ENCODE measurements at regions of chr6 and their contacts with region 1.

Region 1: GRCh38 chr6:17086469-17086868 is 15.4 kb upstream of the STMND1 start:
- DNase-seq: peak in 4 of 6 donors; percentile 27 to 65 (median 57)
- ATAC-seq: peak; percentile 92 to 98 (median 96)
- H3K4me3 ChIP-seq: no peak overlapping the region
- H3K27ac ChIP-seq: no peak overlapping the region
- H3K4me1 ChIP-seq: no peaks in the 10 kb centered on the region
- H3K27me3 ChIP-seq: no peaks in the 10 kb centered on the region
- CTCF ChIP-seq: peak; percentile 53 to 63 (median 59)

Region 2: GRCh38 chr6:16319813-16320532 is 766.5 kb before region 1 on chr6:
- intact Hi-C with region 1: loop called in 1 of 3 experiments (anchors 10 kb)
- DNase-seq: peak in 3 of 6 donors; percentile 25 to 42 (median 37)
- ATAC-seq: peak; percentile 53 to 76 (median 70)
- H3K4me3 ChIP-seq: no peak overlapping the region
- H3K27ac ChIP-seq: peak overlapping the region in 3 of 4 donors; percentile 58 to 86 (median 70)
- H3K4me1 ChIP-seq: peaks cover 0 to 14% (median 4%) of the 10 kb centered on the region in 3 donors
- H3K27me3 ChIP-seq: no peaks in the 10 kb centered on the region
- CTCF ChIP-seq: no peak

Region 3: DNA sequence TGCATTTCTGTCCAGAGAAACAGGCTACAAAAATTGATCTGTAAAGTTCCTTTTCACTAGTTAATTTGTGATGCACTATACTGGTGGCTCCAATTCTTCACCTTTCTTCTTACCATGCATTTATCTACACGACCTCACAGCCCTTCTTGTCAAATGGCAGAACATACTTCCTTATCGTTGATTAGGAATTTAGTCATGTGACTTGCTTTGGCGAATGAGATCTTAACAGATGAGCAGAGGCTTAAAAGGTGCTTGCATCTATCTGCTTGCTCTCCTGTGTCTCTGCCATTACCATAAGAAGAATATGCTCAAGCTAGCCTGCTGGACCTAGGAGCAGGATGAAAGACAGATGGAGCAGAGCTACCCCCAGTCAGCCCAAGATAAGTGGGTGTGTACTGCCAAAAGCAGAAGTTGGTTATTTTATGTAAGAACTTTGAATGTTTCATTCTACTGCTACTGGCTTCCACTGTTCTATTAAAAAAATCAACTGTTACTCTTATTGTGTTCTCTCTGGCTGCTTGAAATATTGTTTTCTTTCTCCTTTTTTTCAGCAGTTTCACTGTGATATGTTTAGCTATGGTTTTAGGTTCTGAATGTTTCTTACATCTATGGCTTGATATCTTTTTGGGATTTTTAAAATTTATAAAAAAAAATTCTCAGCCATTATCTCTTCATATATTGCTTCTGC is 154.5 kb after region 1 on chr6:
- intact Hi-C with region 1: no loop called
- DNase-seq: no peak
- ATAC-seq: no peak
- H3K4me3 ChIP-seq: no peak overlapping the region
- H3K27ac ChIP-seq: no peak overlapping the region
- H3K4me1 ChIP-seq: no peaks in the 10 kb centered on the region
- H3K27me3 ChIP-seq: no peaks in the 10 kb centered on the region
- CTCF ChIP-seq: no peak

Region 4: GRCh38 chr6:17536586-17536985 is 450.1 kb after region 1 on chr6:
- intact Hi-C with region 1: no loop called
- DNase-seq: no peak
- ATAC-seq: no peak
- H3K4me3 ChIP-seq: no peak overlapping the region
- H3K27ac ChIP-seq: no peak overlapping the region
- H3K4me1 ChIP-seq: no peaks in the 10 kb centered on the region
- H3K27me3 ChIP-seq: no peaks in the 10 kb centered on the region
- CTCF ChIP-seq: no peak

Region 5: DNA sequence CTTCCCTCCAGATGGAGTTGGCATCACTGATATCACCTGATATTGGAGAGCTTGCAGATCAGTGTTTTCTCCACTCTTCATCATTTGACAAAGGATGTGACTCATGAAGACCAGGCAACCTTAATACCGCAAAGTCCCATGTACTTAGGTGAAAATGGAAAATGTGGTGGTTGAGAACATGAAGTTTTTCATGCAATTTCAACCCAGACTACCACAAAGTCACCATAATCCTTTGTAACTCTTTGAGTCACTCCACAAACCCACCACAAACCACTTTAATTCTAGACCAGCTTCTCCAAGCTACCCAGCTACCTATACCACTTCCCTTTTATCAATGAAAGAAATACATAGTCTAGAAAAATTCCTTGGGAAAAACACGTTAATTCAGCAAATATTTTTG is 1028.9 kb after region 1 on chr6:
- intact Hi-C with region 1: no loop called
- DNase-seq: no peak
- ATAC-seq: no peak
- H3K4me3 ChIP-seq: no peak overlapping the region
- H3K27ac ChIP-seq: no peak overlapping the region
- H3K4me1 ChIP-seq: no peaks in the 10 kb centered on the region
- H3K27me3 ChIP-seq: no peaks in the 10 kb centered on the region
- CTCF ChIP-seq: no peak

Measured in pancreas (tissue), 10 donors.